KBM-7 (cell line): ENCODE measurements at regions of chr7 and their contacts with region 1.

Region 1: GRCh38 chr7:108181073-108181985 is 51.2 kb upstream of the LAMB4 start:
- DNase-seq: peak; percentile 84

Region 2: GRCh38 chr7:108459931-108460551 is 278.7 kb after region 1 on chr7:
- in situ Hi-C with region 1: loop called (anchors 25 kb)
- DNase-seq: peak; percentile 54